Activated CD4-positive, alpha-beta memory T cell treated with anti-CD3 and anti-CD28 coated beads, Interleukin-2, amount 10 ng/mL, durations not matched to agents 7 days and 5 days (primary cell): ENCODE measurements at regions of chr1 and their contacts with region 1.

Region 1: DNA sequence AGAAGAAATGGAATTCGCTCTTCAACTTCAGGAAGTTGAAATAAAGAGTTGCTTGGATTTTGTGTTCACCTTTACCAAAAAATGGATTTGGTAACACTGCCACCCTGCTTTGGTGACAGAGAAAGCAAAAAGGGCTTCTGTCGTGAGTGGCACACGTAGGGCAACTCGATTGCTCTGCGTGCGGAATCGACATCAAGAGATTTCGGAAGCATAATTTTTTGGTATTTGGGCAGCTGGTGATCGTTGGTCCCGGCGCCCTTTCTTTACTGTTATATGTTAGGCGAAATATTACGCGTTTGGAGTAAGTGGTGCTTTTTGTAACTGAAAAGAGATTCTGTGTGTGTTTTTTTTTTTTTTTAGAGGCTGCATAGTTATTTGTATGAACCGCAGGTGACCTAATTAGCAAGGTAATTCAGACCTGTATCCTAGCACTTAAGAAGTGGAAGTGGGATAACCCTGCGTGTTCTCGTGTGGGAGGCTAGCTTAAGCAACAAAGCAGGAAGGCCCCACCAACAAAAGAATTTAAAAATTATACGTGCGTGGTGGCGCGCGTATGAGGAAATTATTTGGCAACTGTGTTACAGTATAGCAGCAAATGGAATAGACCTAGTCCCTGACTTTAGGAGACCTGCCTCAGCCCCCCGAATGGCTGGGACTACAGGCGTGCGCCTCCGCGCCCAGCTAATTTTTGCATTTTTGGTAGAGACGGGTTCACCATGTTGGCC is at the start of gene RNU11:
- DNase-seq: peak; percentile 90
- H3K4me3 Mint-ChIP-seq: peak within 1 kb of the TSS; percentile 79
- H3K27ac Mint-ChIP-seq: peak within 1 kb of the TSS; percentile 99
- H3K4me1 Mint-ChIP-seq: peaks cover 33% of the 10 kb centered on the region
- H3K27me3 Mint-ChIP-seq: no peaks in the 10 kb centered on the region
- total RNA-seq, gene RNU11: not detected

Region 2: GRCh38 chr1:28296401-28297261 is 352.0 kb before region 1 on chr1:
- CTCF ChIA-PET with region 1: no interaction called
- POLR2A ChIA-PET with region 1: no interaction called
- DNase-seq: no peak
- H3K4me3 Mint-ChIP-seq: no peak overlapping the region
- H3K27ac Mint-ChIP-seq: no peak overlapping the region
- H3K4me1 Mint-ChIP-seq: peaks cover 19% of the 10 kb centered on the region
- H3K27me3 Mint-ChIP-seq: peaks cover 10% of the 10 kb centered on the region

Region 3: GRCh38 chr1:28537457-28538199 is 111.0 kb before region 1 on chr1:
- CTCF ChIA-PET with region 1: no interaction called
- POLR2A ChIA-PET with region 1: no interaction called
- DNase-seq: no peak
- H3K4me3 Mint-ChIP-seq: no peak overlapping the region
- H3K27ac Mint-ChIP-seq: no peak overlapping the region
- H3K4me1 Mint-ChIP-seq: no peaks in the 10 kb centered on the region
- H3K27me3 Mint-ChIP-seq: no peaks in the 10 kb centered on the region

Region 4: GRCh38 chr1:28552758-28553663 is 95.6 kb before region 1 on chr1 and contains the start of gene TRNAU1AP:
- CTCF ChIA-PET with region 1: interaction called, 3 read pairs
- POLR2A ChIA-PET with region 1: interaction called, 19 read pairs
- DNase-seq: peak; percentile 98
- H3K4me3 Mint-ChIP-seq: peak within 1 kb of the TSS; percentile 92
- H3K27ac Mint-ChIP-seq: peak within 1 kb of the TSS; percentile 91
- H3K4me1 Mint-ChIP-seq: peaks cover 29% of the 10 kb centered on the region
- H3K27me3 Mint-ChIP-seq: no peaks in the 10 kb centered on the region
- total RNA-seq, gene TRNAU1AP: 56.9 to 58.9 TPM

Region 5: GRCh38 chr1:28736450-28737306 is 88.0 kb after region 1 on chr1 and contains the start of gene YTHDF2:
- CTCF ChIA-PET with region 1: interaction called, 73 read pairs
- POLR2A ChIA-PET with region 1: interaction called, 119 read pairs
- DNase-seq: peak; percentile 98
- H3K4me3 Mint-ChIP-seq: peak within 1 kb of the TSS; percentile 97
- H3K27ac Mint-ChIP-seq: peak within 1 kb of the TSS; percentile 94
- H3K4me1 Mint-ChIP-seq: peaks cover 38% of the 10 kb centered on the region
- H3K27me3 Mint-ChIP-seq: no peaks in the 10 kb centered on the region
- total RNA-seq, gene YTHDF2: 69.9 to 70.9 TPM

Region 6: DNA sequence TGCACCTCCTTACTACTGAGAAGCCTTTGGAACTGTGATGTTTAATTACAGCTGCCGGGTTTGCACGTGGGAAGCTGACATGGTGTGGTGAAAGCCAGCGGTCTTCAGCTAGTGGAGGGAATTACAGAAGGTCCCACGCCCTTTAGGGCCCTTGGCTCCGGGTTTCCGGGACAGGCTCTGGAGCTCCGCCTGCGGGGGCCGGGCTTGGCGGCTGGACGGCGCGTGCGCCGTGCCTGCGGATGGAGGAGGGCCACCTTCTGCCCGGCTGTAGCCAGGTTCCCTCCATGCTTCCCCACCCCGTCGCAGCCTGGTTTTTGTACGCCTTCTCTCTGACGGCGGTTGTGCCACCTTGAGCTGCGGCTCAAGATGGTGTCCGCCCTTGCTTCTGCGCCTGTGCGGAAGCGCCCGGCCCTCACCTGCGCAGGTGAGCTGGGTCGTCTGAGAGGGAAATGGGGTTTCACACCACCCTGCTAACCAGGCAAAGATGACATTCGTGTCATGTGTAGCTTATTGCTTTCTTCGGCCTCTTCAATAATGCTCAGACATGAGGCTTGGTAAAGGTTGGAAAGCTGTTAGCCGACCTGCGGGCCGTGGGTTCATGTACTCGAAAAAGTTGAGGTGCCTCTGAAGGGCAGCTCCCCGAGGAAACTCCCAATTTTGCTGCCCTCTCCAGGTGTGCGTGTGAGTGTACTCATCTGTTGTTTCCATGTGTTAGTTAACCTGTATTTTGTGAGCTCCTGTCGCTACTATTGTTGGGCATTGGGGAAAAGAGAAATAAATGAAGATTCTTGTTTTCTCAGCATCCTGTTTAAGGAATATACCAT is 126.7 kb after region 1 on chr1:
- CTCF ChIA-PET with region 1: interaction called, 3 read pairs
- POLR2A ChIA-PET with region 1: interaction called, 12 read pairs
- DNase-seq: peak; percentile 71
- H3K4me3 Mint-ChIP-seq: peak overlapping the region; percentile 66
- H3K27ac Mint-ChIP-seq: no peak overlapping the region
- H3K4me1 Mint-ChIP-seq: peaks cover 10% of the 10 kb centered on the region
- H3K27me3 Mint-ChIP-seq: peaks cover 6% of the 10 kb centered on the region

Region 7: GRCh38 chr1:28835237-28835650 is 186.6 kb after region 1 on chr1:
- CTCF ChIA-PET with region 1: no interaction called
- POLR2A ChIA-PET with region 1: no interaction called
- DNase-seq: no peak
- H3K4me3 Mint-ChIP-seq: no peak overlapping the region
- H3K27ac Mint-ChIP-seq: no peak overlapping the region
- H3K4me1 Mint-ChIP-seq: no peaks in the 10 kb centered on the region
- H3K27me3 Mint-ChIP-seq: peaks cover 8% of the 10 kb centered on the region

Region 8: GRCh38 chr1:28860332-28861073 is 211.9 kb after region 1 on chr1:
- CTCF ChIA-PET with region 1: no interaction called
- POLR2A ChIA-PET with region 1: no interaction called
- DNase-seq: no peak
- H3K4me3 Mint-ChIP-seq: no peak overlapping the region
- H3K27ac Mint-ChIP-seq: no peak overlapping the region
- H3K4me1 Mint-ChIP-seq: no peaks in the 10 kb centered on the region
- H3K27me3 Mint-ChIP-seq: peaks cover 5% of the 10 kb centered on the region

Region 9: GRCh38 chr1:28886731-28887418 is 238.2 kb after region 1 on chr1:
- CTCF ChIA-PET with region 1: no interaction called
- POLR2A ChIA-PET with region 1: interaction called, 16 read pairs
- DNase-seq: peak; percentile 92
- H3K4me3 Mint-ChIP-seq: peak overlapping the region; percentile 89
- H3K27ac Mint-ChIP-seq: peak overlapping the region; percentile 82
- H3K4me1 Mint-ChIP-seq: peaks cover 55% of the 10 kb centered on the region
- H3K27me3 Mint-ChIP-seq: no peaks in the 10 kb centered on the region